ENCODE measurements at regions of chr20 and their contacts with region 1.

Region 1: DNA sequence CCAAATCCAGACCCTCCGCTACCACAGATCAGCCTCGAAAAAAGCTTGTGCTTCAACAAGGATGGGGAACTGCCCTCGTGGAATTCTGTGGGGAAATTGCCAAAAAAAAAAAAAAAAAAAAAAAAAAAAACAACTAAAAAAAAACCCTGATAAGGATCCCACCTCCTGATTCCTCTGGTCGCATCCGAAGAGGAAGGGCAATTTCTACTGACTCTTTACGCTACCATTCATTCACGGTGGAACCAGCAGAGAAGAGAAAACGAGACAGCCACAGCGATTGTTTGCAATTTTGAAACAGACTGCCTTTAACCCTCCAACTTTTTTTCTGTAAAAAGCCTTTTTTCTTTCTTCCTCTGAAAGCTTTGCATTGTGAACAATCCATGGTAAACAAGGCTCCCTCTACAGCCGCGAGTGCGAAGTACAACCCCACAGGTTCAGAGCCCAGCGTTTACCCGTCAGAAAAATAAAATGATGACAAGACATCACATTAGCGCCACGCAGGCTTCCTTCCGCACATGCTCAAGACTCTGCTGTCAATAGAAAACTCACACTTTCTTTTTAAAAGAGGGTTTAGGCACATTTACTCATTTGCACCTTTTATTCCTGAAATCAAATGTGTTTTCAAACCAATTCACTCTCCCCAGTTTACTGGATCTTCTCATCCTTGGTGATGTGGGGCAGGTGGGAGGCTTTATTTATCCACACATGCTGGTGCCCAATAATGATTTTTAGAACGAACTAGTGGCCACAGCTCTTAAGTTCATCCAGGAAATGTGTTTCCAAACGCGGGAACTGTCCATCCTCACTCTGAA is 100.0 kb downstream of the NOL4L start:
- DNase-seq: peak; percentile 72 to 92 (median 86)
- ATAC-seq: peak; percentile 82
- H3K4me3 ChIP-seq: peak overlapping the region; percentile 67 to 77
- H3K4me3 Mint-ChIP-seq: peak overlapping the region; percentile 91
- H3K27ac ChIP-seq: peak overlapping the region; percentile 46 to 62
- H3K27ac Mint-ChIP-seq: peak overlapping the region; percentile 94
- H3K4me1 ChIP-seq: peaks cover 36% of the 10 kb centered on the region
- H3K4me1 Mint-ChIP-seq: peaks cover 46% of the 10 kb centered on the region
- H3K27me3 ChIP-seq: no peaks in the 10 kb centered on the region
- H3K27me3 Mint-ChIP-seq: no peaks in the 10 kb centered on the region
- CTCF ChIP-seq: peak; percentile 88

Region 2: GRCh38 chr20:32336918-32337347 is 148.2 kb before region 1 on chr20:
- CTCF ChIA-PET with region 1: interaction called, 3 read pairs
- POLR2A ChIA-PET with region 1: no interaction called
- intact Hi-C with region 1: loop called in 1 of 2 experiments (anchors 2 kb)
- DNase-seq: peak in 2 of 9 experiments; percentile 32 to 57
- ATAC-seq: peak; percentile 71
- H3K4me3 ChIP-seq: no peak overlapping the region
- H3K4me3 Mint-ChIP-seq: no peak overlapping the region
- H3K27ac ChIP-seq: no peak overlapping the region
- H3K27ac Mint-ChIP-seq: no peak overlapping the region
- H3K4me1 ChIP-seq: no peaks in the 10 kb centered on the region
- H3K4me1 Mint-ChIP-seq: peaks cover 17% of the 10 kb centered on the region
- H3K27me3 ChIP-seq: no peaks in the 10 kb centered on the region
- H3K27me3 Mint-ChIP-seq: no peaks in the 10 kb centered on the region
- CTCF ChIP-seq: peak; percentile 64

Region 3: GRCh38 chr20:32445539-32446273 is 39.5 kb before region 1 on chr20:
- CTCF ChIA-PET with region 1: interaction called, 3 read pairs
- POLR2A ChIA-PET with region 1: interaction called, 3 read pairs
- intact Hi-C with region 1: loop called in 1 of 2 experiments (anchors 5 kb)
- DNase-seq: peak in 2 of 9 experiments; percentile 10 to 44
- ATAC-seq: no peak
- H3K4me3 ChIP-seq: no peak overlapping the region
- H3K4me3 Mint-ChIP-seq: no peak overlapping the region
- H3K27ac ChIP-seq: no peak overlapping the region
- H3K27ac Mint-ChIP-seq: peak overlapping the region; percentile 76
- H3K4me1 ChIP-seq: peaks cover 23% of the 10 kb centered on the region
- H3K4me1 Mint-ChIP-seq: peaks cover 31% of the 10 kb centered on the region
- H3K27me3 ChIP-seq: no peaks in the 10 kb centered on the region
- H3K27me3 Mint-ChIP-seq: no peaks in the 10 kb centered on the region
- CTCF ChIP-seq: no peak

Region 4: DNA sequence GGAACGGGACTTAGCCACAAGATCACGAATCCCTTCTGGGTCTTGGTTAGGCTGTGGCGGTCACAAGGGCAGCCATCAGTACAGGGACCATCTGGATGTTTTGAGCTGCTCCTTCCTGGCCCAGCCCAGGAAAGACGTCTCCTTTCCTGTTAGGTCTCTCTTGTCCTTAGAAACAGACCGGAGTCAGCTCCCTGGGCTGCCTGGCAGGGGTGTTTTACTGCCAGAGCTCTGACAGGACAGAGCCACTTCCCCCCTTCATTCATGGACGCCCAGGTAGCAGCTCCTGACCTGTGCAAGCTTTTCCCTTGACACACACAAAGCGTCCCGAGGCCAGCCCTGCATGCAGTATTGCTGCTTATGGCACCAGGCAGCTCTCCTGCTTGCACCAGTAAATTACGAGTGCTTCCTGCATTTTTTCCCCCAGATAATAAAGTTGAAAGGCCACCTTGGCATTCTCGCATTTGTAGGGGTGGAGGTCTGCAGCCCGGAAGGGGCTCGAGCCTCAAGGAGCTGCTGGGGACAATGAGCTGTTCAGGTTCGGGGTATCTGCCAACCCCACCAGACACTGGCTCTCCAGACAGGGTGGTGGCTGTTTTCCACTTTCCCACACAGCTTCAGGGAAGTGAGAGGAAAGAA is 12.5 kb after region 1 on chr20:
- CTCF ChIA-PET with region 1: interaction called, 15 read pairs
- POLR2A ChIA-PET with region 1: interaction called, 4 read pairs
- intact Hi-C with region 1: no loop called
- DNase-seq: no peak
- ATAC-seq: no peak
- H3K4me3 ChIP-seq: no peak overlapping the region
- H3K4me3 Mint-ChIP-seq: no peak overlapping the region
- H3K27ac ChIP-seq: no peak overlapping the region
- H3K27ac Mint-ChIP-seq: peak overlapping the region; percentile 37
- H3K4me1 ChIP-seq: no peaks in the 10 kb centered on the region
- H3K4me1 Mint-ChIP-seq: peaks cover 44% of the 10 kb centered on the region
- H3K27me3 ChIP-seq: no peaks in the 10 kb centered on the region
- H3K27me3 Mint-ChIP-seq: no peaks in the 10 kb centered on the region
- CTCF ChIP-seq: no peak

Measured in CD8-positive, alpha-beta T cell (primary cell).